ENCODE measurements at regions of chr11 and their contacts with region 1.

Region 1: GRCh38 chr11:102007567-102008437 is 39.4 kb upstream of the CFAP300 start:
- DNase-seq: no peak
- H3K4me3 Mint-ChIP-seq: no peak overlapping the region
- H3K27ac Mint-ChIP-seq: no peak overlapping the region
- H3K4me1 Mint-ChIP-seq: peaks cover 9% of the 10 kb centered on the region
- H3K27me3 Mint-ChIP-seq: peaks cover 8% of the 10 kb centered on the region

Region 2: DNA sequence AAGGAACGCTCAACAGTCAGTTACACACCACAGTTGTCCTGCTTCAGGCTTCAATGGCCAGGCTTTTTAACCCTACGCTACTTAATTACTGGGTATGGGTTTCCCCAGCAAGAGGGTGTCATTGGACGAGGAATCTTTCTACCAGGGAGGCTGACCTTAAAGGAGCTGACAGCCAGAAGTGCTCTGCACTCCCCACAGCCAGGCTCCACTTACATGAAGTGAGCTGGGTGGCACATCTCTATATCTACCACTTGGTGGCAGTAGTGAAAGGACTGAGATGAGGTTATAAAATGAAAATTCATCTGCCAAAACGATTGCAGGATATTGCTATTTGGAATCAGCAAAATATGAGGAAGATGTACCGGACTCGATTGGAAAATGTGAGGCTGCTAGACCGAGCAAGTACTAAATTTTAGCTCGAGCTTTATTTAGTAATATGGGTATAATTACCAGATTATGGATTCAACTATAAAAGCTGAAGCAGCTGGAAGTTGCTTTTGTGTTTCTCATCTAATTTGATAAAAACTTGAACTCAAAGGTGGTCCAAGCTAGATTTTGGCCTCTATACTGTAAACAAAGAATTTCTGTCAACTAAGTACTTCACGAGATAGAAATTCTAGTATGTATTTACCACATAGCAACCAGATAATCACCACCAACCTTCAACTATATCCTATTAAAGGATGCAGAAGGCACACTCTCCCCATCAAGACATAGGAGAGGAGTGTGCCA is 146.9 kb before region 1 on chr11:
- CTCF ChIA-PET with region 1: interaction called, 60 read pairs
- POLR2A ChIA-PET with region 1: no interaction called
- DNase-seq: peak; percentile 17
- H3K4me3 Mint-ChIP-seq: no peak overlapping the region
- H3K27ac Mint-ChIP-seq: no peak overlapping the region
- H3K4me1 Mint-ChIP-seq: no peaks in the 10 kb centered on the region
- H3K27me3 Mint-ChIP-seq: peaks cover 9% of the 10 kb centered on the region

Region 3: GRCh38 chr11:101996111-101996510 is 11.7 kb before region 1 on chr11:
- CTCF ChIA-PET with region 1: interaction called, 16 read pairs
- POLR2A ChIA-PET with region 1: no interaction called
- DNase-seq: no peak
- H3K4me3 Mint-ChIP-seq: no peak overlapping the region
- H3K27ac Mint-ChIP-seq: no peak overlapping the region
- H3K4me1 Mint-ChIP-seq: no peaks in the 10 kb centered on the region
- H3K27me3 Mint-ChIP-seq: no peaks in the 10 kb centered on the region

Region 4: DNA sequence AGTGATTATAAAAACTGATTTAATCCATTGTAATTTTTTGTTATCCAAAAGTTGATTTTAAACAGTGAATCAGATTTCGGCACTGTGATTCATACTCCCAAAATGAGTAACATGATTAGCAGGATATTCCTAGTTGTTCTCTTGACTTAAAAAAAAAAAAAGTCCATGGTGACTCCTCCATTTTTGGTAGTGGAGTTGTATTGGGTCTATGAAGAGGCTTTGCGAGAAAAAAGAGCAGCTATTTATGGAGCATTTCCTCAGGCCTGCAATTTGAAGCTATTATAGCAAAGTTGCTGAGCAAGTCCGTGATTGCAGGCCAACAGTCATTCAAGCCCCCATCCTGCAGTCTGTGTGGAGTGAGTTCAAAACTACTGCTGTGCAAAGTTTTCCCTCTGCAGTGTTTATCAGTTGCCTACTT is 131.3 kb after region 1 on chr11:
- CTCF ChIA-PET with region 1: no interaction called
- POLR2A ChIA-PET with region 1: no interaction called
- DNase-seq: no peak
- H3K4me3 Mint-ChIP-seq: no peak overlapping the region
- H3K27ac Mint-ChIP-seq: no peak overlapping the region
- H3K4me1 Mint-ChIP-seq: no peaks in the 10 kb centered on the region
- H3K27me3 Mint-ChIP-seq: no peaks in the 10 kb centered on the region